IMR-90 (cell line): ENCODE measurements at regions of chr5 and their contacts with region 1.

Region 1: DNA sequence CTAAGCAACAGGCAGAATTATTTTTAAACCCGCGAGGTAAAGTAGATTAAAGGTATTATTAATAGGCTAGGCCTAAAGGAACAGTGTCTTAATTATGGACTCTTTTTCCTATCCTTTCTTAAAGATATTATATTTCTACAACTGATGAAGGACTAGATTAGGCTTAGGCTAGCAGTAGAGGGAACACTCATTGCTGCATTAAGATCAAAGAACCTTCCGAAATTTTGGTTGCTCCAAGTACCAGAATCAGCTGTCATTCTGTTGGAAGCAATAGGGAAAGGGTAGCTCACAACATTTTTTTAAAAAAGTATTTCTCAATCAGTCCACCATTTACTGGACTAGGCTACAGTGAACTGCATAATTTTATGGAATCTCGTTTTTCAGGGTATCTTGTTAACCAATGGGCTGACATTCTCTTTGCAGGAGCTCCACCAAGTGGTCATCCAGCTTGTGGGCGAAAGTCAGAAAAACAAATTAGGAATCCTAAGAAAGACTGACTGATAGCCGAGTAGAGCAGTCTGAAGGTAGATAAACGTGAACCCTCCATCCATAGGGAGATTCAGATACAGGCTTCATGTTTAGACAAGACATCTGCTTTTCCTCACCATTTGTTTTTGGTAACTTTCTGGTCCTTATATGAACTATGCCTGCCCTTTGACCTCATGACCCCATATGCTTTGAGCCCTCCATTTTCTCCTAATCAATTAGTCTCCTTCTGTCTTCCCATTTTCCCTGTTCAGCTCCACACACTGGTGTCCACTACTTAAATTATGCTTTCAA is 103.6 kb upstream of the CHD1 start:
- DNase-seq: peak; percentile 80
- ATAC-seq: peak; percentile 94
- H3K4me3 ChIP-seq: peak overlapping the region; percentile 55; the same call in 1 of the 2 replicates
- H3K27ac ChIP-seq: no peak overlapping the region
- H3K4me1 ChIP-seq: peaks cover 4% of the 10 kb centered on the region; the same call in 1 of the 2 replicates
- H3K27me3 ChIP-seq: no peaks in the 10 kb centered on the region
- CTCF ChIP-seq: peak; percentile 90
- POLR2A ChIP-seq: no peak
- RAD21 ChIP-seq: peak; percentile 93

Region 2: DNA sequence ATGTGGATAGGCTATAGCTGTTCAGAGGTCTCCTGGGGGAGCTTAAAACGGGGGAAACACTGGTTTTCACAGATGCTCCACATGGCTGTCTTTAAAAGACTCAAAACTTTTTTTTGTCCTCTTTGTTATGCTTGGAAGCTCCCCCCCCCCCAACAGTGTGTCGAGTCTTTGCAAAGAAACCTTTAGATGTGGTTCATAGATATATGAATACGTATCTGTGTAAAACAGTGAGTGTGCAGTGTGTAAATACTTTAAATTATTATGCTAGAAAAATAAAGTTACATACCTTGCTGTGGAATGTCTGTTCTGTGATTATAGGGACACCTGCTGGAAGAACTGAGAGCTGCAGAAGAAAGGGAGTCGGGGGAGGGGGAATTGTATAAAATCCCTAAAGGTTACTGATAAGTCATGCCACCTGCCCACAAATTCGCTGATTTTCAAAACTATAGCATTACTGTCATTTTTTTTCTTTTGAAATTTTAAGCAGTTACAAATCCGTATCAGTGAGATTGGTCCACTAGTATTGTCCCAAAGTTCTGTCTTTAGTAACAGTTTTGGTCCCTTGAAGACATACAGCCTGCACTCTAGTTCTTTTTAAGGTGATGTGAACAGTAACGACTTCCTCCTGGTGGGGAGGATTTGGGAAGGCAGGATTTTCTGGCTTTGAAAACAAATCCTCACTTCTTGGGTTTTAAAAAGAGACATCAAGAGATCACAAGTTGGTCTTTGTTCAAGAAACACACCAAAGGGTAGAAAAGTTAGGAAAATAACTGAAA is 236.0 kb before region 1 on chr5:
- CTCF ChIA-PET with region 1: no interaction called
- POLR2A ChIA-PET with region 1: no interaction called
- dilution Hi-C with region 1: no loop called
- in situ Hi-C with region 1: no loop called
- intact Hi-C with region 1: loop called (anchors 5 kb)
- DNase-seq: peak; percentile 77
- ATAC-seq: peak; percentile 73
- H3K4me3 ChIP-seq: no peak overlapping the region
- H3K27ac ChIP-seq: no peak overlapping the region
- H3K4me1 ChIP-seq: no peaks in the 10 kb centered on the region; the same call in 1 of the 2 replicates
- H3K27me3 ChIP-seq: no peaks in the 10 kb centered on the region
- CTCF ChIP-seq: peak; percentile 81
- POLR2A ChIP-seq: peak; percentile 48
- RAD21 ChIP-seq: peak; percentile 61

Region 3: GRCh38 chr5:98905857-98906690 is 126.3 kb before region 1 on chr5:
- CTCF ChIA-PET with region 1: interaction called, 5 read pairs
- POLR2A ChIA-PET with region 1: no interaction called
- dilution Hi-C with region 1: no loop called
- in situ Hi-C with region 1: loop called (anchors 5 kb)
- intact Hi-C with region 1: loop called (anchors 1 kb)
- DNase-seq: peak; percentile 59
- ATAC-seq: peak; percentile 77
- H3K4me3 ChIP-seq: no peak overlapping the region
- H3K27ac ChIP-seq: no peak overlapping the region
- H3K4me1 ChIP-seq: peaks cover 2% of the 10 kb centered on the region
- H3K27me3 ChIP-seq: no peaks in the 10 kb centered on the region
- CTCF ChIP-seq: peak; percentile 73
- POLR2A ChIP-seq: no peak
- RAD21 ChIP-seq: peak; percentile 74

Region 4: GRCh38 chr5:99060306-99061261 is 28.2 kb after region 1 on chr5:
- CTCF ChIA-PET with region 1: interaction called, 8 read pairs
- POLR2A ChIA-PET with region 1: no interaction called
- dilution Hi-C with region 1: no loop called
- in situ Hi-C with region 1: no loop called
- intact Hi-C with region 1: loop called (anchors 2 kb)
- DNase-seq: peak; percentile 65
- ATAC-seq: 0 out of 2 replicates have a peak, but pooled peaks have one; percentile 30
- H3K4me3 ChIP-seq: no peak overlapping the region
- H3K27ac ChIP-seq: no peak overlapping the region
- H3K4me1 ChIP-seq: peaks cover 7% of the 10 kb centered on the region
- H3K27me3 ChIP-seq: no peaks in the 10 kb centered on the region; the same call in 1 of the 2 replicates
- CTCF ChIP-seq: peak; percentile 85
- POLR2A ChIP-seq: no peak
- RAD21 ChIP-seq: peak; percentile 73